ENCODE measurements at regions of chr3 and their contacts with region 1.

Region 1: DNA sequence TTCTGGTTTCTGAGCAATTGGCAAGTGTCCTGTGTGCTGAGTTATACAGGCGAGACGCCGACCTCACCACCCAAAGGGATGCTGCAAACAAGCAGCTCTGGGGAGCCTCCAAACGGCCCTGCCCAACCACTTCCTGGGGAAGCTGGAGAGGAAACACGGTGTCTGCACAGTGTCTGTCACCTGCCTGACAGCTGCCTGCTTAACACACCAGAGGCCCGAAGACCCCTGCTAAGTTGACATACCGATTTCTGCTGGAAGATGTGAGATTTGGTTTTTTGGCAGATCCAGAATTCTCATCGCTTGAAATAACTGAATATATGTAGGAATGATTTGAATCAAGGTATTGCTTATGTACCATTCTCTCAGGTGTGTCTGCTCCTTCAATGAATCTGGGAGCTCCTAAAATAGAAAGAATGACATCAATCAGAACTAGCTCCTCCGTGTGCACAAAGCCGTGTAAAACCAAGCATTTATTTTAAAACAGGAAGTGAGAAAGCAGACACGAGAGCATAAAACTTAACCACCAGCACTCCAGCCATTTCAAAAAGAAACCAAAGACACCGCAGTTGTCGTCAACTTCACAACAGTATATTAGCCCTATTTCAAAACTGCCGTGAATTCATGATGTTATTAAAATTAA is 27.2 kb downstream of the LRRC2 start:
- DNase-seq: peak; percentile 79 to 95 (median 91)
- H3K4me3 ChIP-seq: peak overlapping the region in 6 of 7 experiments; percentile 29 to 70 (median 42)
- H3K27ac ChIP-seq: peak overlapping the region; percentile 19 to 65
- H3K4me1 ChIP-seq: peaks cover 17 to 43% (median 35%) of the 10 kb centered on the region in 4 experiments
- H3K27me3 ChIP-seq: no peaks in the 10 kb centered on the region

Region 2: DNA sequence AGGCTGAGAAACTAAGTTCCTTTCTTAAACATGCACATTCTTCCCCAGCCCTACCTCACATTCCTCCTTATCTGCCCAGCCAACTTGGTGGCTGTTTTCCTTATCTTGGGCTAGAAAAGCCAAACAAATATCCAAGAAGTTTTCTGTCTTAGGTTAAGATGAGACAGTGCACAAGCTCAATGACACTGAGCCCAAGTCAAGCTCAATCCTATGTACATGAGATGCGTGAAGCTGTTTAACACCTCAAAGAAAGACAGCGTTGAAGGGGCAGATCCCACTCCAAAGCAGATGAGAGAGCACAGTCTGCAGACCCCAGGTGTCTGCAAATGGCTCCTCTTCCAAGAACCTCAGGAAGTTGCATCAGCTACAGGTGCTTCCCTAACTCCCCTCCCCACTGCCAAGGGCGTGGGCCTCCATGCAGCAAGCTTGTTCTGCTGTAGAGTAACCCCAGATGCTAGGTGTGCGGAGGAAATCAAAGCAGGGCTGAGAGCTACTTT is 10.5 kb after region 1 on chr3:
- CTCF ChIA-PET with region 1: interaction called, 14 read pairs
- POLR2A ChIA-PET with region 1: interaction called, 4 read pairs
- DNase-seq: peak in 2 of 3 donors; percentile 58 to 77
- H3K4me3 ChIP-seq: peak overlapping the region in 1 of 7 experiments; percentile 33
- H3K27ac ChIP-seq: peak overlapping the region in 1 of 2 experiments; percentile 43
- H3K4me1 ChIP-seq: peaks cover 3 to 13% (median 7%) of the 10 kb centered on the region in 4 experiments
- H3K27me3 ChIP-seq: no peaks in the 10 kb centered on the region

Region 3: GRCh38 chr3:46558184-46559043 is 19.5 kb after region 1 on chr3:
- CTCF ChIA-PET with region 1: interaction called, 26 read pairs
- POLR2A ChIA-PET with region 1: interaction called, 8 read pairs
- DNase-seq: peak; percentile 88 to 90 (median 89)
- H3K4me3 ChIP-seq: peak overlapping the region in 6 of 7 experiments; percentile 44 to 89 (median 68)
- H3K27ac ChIP-seq: no peak overlapping the region
- H3K4me1 ChIP-seq: peaks cover 0 to 8% (median 2%) of the 10 kb centered on the region in 4 experiments
- H3K27me3 ChIP-seq: no peaks in the 10 kb centered on the region